ENCODE measurements at regions of chr9 and their contacts with region 1.

Region 1: GRCh38 chr9:116482740-116483139 is 204.4 kb upstream of the TRIM32 start:
- DNase-seq: no peak
- H3K4me3 ChIP-seq: no peak overlapping the region
- H3K4me3 Mint-ChIP-seq: no peak overlapping the region
- H3K27ac ChIP-seq: no peak overlapping the region
- H3K27ac Mint-ChIP-seq: no peak overlapping the region
- H3K4me1 ChIP-seq: no peaks in the 10 kb centered on the region
- H3K4me1 Mint-ChIP-seq: no peaks in the 10 kb centered on the region
- H3K27me3 ChIP-seq: no peaks in the 10 kb centered on the region
- H3K27me3 Mint-ChIP-seq: no peaks in the 10 kb centered on the region

Region 2: GRCh38 chr9:115786321-115786720 is 696.4 kb before region 1 on chr9:
- CTCF ChIA-PET with region 1: no interaction called
- POLR2A ChIA-PET with region 1: no interaction called
- intact Hi-C with region 1: no loop called
- DNase-seq: no peak
- H3K4me3 ChIP-seq: no peak overlapping the region
- H3K4me3 Mint-ChIP-seq: no peak overlapping the region
- H3K27ac ChIP-seq: no peak overlapping the region
- H3K27ac Mint-ChIP-seq: no peak overlapping the region
- H3K4me1 ChIP-seq: no peaks in the 10 kb centered on the region
- H3K4me1 Mint-ChIP-seq: no peaks in the 10 kb centered on the region
- H3K27me3 ChIP-seq: no peaks in the 10 kb centered on the region
- H3K27me3 Mint-ChIP-seq: no peaks in the 10 kb centered on the region

Region 3: DNA sequence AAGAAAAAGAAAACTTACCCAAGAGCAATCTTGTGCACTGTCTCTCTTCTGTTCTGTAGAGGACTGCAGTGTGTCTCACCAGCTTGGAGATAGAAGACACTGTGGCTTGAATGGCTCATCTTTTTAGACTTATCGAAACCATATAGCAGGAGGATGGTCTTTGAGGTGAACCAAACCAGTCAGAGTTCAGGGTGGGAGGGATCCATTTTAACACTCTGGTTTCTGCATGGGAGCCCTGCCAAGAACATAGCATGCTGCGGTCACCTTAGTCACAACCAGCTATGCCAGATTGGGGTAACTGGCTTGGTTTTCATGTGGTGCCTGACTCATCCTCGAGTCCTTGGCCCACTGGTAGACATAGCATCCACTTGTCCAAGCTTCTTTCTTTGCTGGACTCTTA is 194.1 kb before region 1 on chr9:
- CTCF ChIA-PET with region 1: no interaction called
- POLR2A ChIA-PET with region 1: no interaction called
- intact Hi-C with region 1: no loop called
- DNase-seq: no peak
- H3K4me3 ChIP-seq: no peak overlapping the region
- H3K4me3 Mint-ChIP-seq: no peak overlapping the region
- H3K27ac ChIP-seq: no peak overlapping the region
- H3K27ac Mint-ChIP-seq: no peak overlapping the region
- H3K4me1 ChIP-seq: no peaks in the 10 kb centered on the region
- H3K4me1 Mint-ChIP-seq: no peaks in the 10 kb centered on the region
- H3K27me3 ChIP-seq: no peaks in the 10 kb centered on the region
- H3K27me3 Mint-ChIP-seq: peaks cover 5 to 6% of the 10 kb centered on the region in 2 donors

Region 4: DNA sequence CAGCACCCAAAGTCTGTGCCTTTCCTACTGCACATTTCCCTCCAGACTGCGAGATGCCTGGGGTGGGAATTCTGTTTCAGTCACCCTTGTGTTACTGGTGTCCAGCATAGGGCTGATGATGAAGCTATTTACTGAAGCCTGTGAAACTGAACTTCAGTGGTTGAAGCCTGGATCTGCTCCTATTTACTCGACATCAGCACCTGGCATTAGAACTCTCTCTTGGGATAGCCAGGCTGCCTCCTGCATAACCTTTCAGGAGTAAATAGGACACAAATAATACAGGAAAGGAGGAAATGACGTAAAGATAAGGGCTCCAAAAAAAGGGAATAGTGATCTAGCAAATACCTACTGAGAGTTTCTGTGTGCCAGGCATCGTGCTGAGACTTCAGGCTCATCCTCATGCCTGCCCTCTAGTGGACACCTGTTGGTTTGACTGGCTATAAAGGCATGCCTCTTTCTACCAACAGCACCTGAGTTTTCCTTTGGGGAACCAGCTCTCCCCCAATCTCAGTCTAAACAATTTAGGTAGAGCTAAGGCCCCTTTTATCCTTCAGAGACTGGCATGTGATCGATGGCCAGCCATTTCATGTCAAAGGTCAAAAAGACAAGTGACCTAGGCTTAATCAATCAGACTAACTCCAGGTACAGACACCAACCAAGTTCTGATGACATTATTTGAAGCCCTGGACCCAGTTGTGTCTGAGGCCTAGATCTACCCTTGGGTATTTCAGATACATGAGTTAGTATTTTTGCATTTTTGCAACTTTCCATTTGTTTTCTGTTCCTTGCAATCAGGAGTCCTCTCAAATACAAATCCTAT is 12.3 kb after region 1 on chr9:
- CTCF ChIA-PET with region 1: interaction called, 14 read pairs
- POLR2A ChIA-PET with region 1: no interaction called
- intact Hi-C with region 1: no loop called
- DNase-seq: peak in 2 of 5 donors; percentile 6 to 7
- H3K4me3 ChIP-seq: no peak overlapping the region
- H3K4me3 Mint-ChIP-seq: no peak overlapping the region
- H3K27ac ChIP-seq: no peak overlapping the region
- H3K27ac Mint-ChIP-seq: no peak overlapping the region
- H3K4me1 ChIP-seq: no peaks in the 10 kb centered on the region
- H3K4me1 Mint-ChIP-seq: no peaks in the 10 kb centered on the region
- H3K27me3 ChIP-seq: no peaks in the 10 kb centered on the region
- H3K27me3 Mint-ChIP-seq: no peaks in the 10 kb centered on the region

Region 5: GRCh38 chr9:116516456-116516855 is 33.7 kb after region 1 on chr9:
- CTCF ChIA-PET with region 1: no interaction called
- POLR2A ChIA-PET with region 1: no interaction called
- intact Hi-C with region 1: no loop called
- DNase-seq: no peak
- H3K4me3 ChIP-seq: no peak overlapping the region
- H3K4me3 Mint-ChIP-seq: no peak overlapping the region
- H3K27ac ChIP-seq: no peak overlapping the region
- H3K27ac Mint-ChIP-seq: no peak overlapping the region
- H3K4me1 ChIP-seq: no peaks in the 10 kb centered on the region
- H3K4me1 Mint-ChIP-seq: no peaks in the 10 kb centered on the region
- H3K27me3 ChIP-seq: no peaks in the 10 kb centered on the region
- H3K27me3 Mint-ChIP-seq: no peaks in the 10 kb centered on the region

Measured in CD4-positive, alpha-beta memory T cell (primary cell).